GM12878 (cell line): ENCODE measurements at regions of chr6 and their contacts with region 1.

Region 1: GRCh38 chr6:42043787-42044475 is 6.4 kb upstream of the TAF8 start:
- DNase-seq: peak; percentile 68
- ATAC-seq: peak; percentile 79
- H3K4me3 ChIP-seq: peak overlapping the region; percentile 2; the same call in 1 of the 2 replicates
- H3K27ac ChIP-seq: peak overlapping the region; percentile 25; the same call in 1 of the 2 replicates
- H3K4me1 ChIP-seq: peaks cover 43% of the 10 kb centered on the region
- H3K27me3 ChIP-seq: no peaks in the 10 kb centered on the region
- CTCF ChIP-seq: peak; percentile 95 to 99 (median 98); a peak in 5 of 6 replicates
- EP300 ChIP-seq: no peak
- POLR2A ChIP-seq: no peak
- RAD21 ChIP-seq: peak; percentile 100

Region 2: DNA sequence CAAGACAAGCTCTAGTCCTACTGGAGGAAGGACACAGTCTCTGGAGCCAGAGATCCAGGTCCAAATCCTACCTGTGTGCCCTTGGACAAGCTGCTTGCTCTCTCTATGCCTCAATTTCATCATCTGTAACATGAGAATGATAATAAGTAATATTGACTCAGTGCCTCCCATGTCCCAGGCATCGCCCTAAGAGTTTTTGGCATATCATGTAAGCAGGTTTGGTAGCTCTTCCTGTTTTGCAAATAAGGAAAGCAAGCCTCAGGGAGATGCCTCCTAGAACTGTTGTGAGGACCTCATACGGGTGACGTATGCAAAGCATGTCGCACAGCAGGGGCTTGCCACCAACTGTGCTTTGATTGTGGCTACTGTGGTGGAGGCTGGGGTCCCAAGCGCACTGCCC is 1395.0 kb before region 1 on chr6:
- CTCF ChIA-PET with region 1: no interaction called
- POLR2A ChIA-PET with region 1: no interaction called
- RAD21 ChIA-PET with region 1: no interaction called
- SMC1A ChIA-PET with region 1: no interaction called
- in situ Hi-C with region 1: no loop called
- intact Hi-C with region 1: no loop called
- DNase-seq: no peak
- ATAC-seq: no peak
- H3K4me3 ChIP-seq: no peak overlapping the region
- H3K27ac ChIP-seq: no peak overlapping the region
- H3K4me1 ChIP-seq: no peaks in the 10 kb centered on the region
- H3K27me3 ChIP-seq: peaks cover 0 to 4% of the 10 kb centered on the region in 2 experiments
- CTCF ChIP-seq: no peak
- EP300 ChIP-seq: no peak
- POLR2A ChIP-seq: no peak
- RAD21 ChIP-seq: no peak

Region 3: DNA sequence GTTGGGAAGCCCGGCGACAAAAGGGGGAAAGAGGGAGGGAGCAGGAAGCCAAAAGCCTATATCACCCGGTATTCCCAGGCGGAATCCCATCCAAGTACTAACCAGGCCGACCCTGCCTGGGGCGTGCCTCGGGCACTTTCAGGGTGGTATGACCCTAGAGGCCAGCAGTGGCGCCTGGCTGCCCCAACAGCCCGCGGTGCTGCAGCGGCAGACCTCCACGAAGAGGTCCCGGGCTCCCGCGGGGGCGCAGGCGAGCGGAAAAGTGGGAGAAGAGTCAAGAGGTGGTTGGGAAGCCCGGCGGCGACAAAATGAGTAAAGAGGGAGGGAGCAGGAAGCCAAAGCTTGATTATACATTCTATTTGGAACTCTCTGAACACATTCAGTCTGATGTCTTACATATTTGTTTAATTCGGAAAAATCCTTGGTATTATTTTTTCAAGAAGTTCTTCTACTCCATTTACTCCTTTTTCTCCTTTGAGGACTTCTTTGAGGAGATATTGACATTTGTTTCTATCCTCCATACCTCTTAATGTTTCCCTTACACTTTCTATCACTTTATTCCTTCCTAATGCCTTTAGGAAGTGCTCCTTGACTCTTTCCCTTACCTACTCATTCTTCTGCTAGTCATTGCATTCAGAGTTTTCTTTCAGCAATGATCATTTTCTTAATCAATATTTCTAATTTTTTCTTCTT is 804.3 kb before region 1 on chr6:
- CTCF ChIA-PET with region 1: no interaction called
- POLR2A ChIA-PET with region 1: no interaction called
- RAD21 ChIA-PET with region 1: no interaction called
- SMC1A ChIA-PET with region 1: no interaction called
- in situ Hi-C with region 1: no loop called
- intact Hi-C with region 1: no loop called
- DNase-seq: no peak
- ATAC-seq: no peak
- H3K4me3 ChIP-seq: no peak overlapping the region
- H3K27ac ChIP-seq: no peak overlapping the region
- H3K4me1 ChIP-seq: no peaks in the 10 kb centered on the region
- H3K27me3 ChIP-seq: peaks cover 2 to 4% of the 10 kb centered on the region in 2 experiments; a peak in 3 of 4 replicates
- CTCF ChIP-seq: no peak
- EP300 ChIP-seq: no peak
- POLR2A ChIP-seq: no peak
- RAD21 ChIP-seq: no peak

Region 4: GRCh38 chr6:41705996-41706835 is 337.7 kb before region 1 on chr6:
- CTCF ChIA-PET with region 1: interaction called, 5 read pairs
- POLR2A ChIA-PET with region 1: no interaction called
- RAD21 ChIA-PET with region 1: no interaction called
- SMC1A ChIA-PET with region 1: interaction called, 3 read pairs
- in situ Hi-C with region 1: no loop called
- intact Hi-C with region 1: loop called (anchors 10 kb)
- DNase-seq: peak; percentile 87
- ATAC-seq: peak; percentile 90
- H3K4me3 ChIP-seq: peak overlapping the region; percentile 85
- H3K27ac ChIP-seq: peak overlapping the region; percentile 99
- H3K4me1 ChIP-seq: peaks cover 55% of the 10 kb centered on the region
- H3K27me3 ChIP-seq: no peaks in the 10 kb centered on the region
- CTCF ChIP-seq: peak; percentile 82 to 96 (median 91)
- EP300 ChIP-seq: peak; percentile 93 to 97
- POLR2A ChIP-seq: peak; percentile 51; the same call in 1 of the 2 replicates
- RAD21 ChIP-seq: peak; percentile 48

Region 5: GRCh38 chr6:41801380-41801779 is 242.6 kb before region 1 on chr6:
- CTCF ChIA-PET with region 1: interaction called, 38 read pairs
- POLR2A ChIA-PET with region 1: no interaction called
- RAD21 ChIA-PET with region 1: interaction called, 14 read pairs
- SMC1A ChIA-PET with region 1: interaction called, 14 read pairs
- in situ Hi-C with region 1: no loop called
- intact Hi-C with region 1: loop called (anchors 5 kb)
- DNase-seq: no peak
- ATAC-seq: no peak
- H3K4me3 ChIP-seq: no peak overlapping the region
- H3K27ac ChIP-seq: no peak overlapping the region
- H3K4me1 ChIP-seq: no peaks in the 10 kb centered on the region
- H3K27me3 ChIP-seq: no peaks in the 10 kb centered on the region
- CTCF ChIP-seq: peak; percentile 25 to 49 (median 26); a peak in 5 of 6 replicates
- EP300 ChIP-seq: no peak
- POLR2A ChIP-seq: no peak
- RAD21 ChIP-seq: peak; percentile 63

Region 6: DNA sequence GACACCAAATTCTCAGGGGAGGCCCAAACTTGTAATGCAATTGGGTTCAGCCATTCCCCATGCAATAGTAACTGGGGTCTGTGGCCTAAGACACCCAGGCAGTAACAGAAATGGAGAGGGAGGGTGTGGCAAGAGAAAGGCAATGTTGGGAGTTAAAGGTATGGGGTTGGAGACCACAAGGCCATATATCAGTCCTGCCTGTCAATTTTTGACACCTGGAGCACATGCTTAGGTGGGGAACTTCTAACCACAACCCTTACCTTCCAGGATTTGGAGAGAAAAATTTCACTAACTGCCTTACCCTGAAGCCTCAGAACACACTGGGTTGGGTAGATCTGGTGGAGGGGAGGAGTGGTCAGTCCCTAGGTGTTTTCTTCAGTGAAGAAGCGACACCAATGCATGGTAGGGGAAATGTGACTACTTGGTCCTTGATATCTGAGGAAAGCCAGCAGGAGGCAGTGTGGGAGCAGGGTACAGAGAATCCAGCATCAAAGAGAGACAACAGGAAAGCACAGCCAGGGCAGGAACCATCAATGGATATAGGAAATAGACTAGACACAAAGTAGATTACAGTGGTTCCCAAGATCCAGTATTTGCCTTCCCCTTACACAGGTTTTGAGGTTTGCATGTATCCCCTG is 141.9 kb before region 1 on chr6:
- CTCF ChIA-PET with region 1: interaction called, 51 read pairs
- POLR2A ChIA-PET with region 1: interaction called, 3 read pairs
- RAD21 ChIA-PET with region 1: interaction called, 29 read pairs
- SMC1A ChIA-PET with region 1: interaction called, 13 read pairs
- in situ Hi-C with region 1: no loop called
- intact Hi-C with region 1: loop called (anchors 1 kb)
- DNase-seq: no peak
- ATAC-seq: peak; percentile 69
- H3K4me3 ChIP-seq: no peak overlapping the region
- H3K27ac ChIP-seq: no peak overlapping the region
- H3K4me1 ChIP-seq: no peaks in the 10 kb centered on the region
- H3K27me3 ChIP-seq: no peaks in the 10 kb centered on the region
- CTCF ChIP-seq: peak; percentile 48 to 51 (median 48)
- EP300 ChIP-seq: no peak
- POLR2A ChIP-seq: no peak
- RAD21 ChIP-seq: peak; percentile 70

Region 7: DNA sequence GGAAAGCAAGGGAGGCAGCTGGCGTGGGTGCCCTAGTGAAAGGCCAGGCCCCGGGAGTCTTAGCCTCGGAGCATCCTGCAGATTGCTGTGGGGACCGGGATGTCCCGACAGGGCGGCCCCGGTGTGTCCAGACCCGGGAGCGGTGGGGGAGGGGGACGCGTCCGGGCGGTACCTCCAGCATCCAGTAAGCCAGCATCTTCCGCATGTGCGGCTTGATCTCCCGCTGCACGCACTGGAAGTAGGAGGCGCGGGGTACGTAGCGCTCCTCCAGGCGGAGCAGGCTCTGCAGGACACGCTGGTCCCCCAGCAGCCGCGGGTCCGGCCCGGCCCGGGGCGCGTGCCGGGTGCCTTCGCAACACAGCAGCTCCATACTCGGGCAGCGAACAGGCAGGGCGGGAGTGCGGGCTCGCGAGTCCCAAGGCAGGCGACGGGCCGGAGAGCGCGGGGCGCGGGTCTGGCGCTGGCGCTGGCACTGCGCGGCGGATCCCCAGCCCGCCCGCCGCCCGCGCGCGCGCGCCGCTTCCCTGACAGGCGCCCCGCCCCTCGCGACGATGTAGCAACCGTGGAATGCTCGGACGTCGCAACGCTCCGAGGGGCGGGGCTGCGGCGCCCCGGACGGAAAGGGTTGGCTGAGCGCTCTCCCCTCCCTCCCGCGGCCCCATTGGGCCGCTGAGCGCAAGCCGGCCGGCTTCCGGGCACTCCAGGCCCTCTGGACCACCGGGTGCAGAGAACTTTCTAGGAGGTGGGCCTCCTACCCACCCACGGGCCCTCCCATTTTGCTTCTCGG is 102.5 kb before region 1 on chr6 and contains the start of gene CCND3:
- CTCF ChIA-PET with region 1: interaction called, 193 read pairs
- POLR2A ChIA-PET with region 1: interaction called, 8 read pairs
- RAD21 ChIA-PET with region 1: interaction called, 69 read pairs
- SMC1A ChIA-PET with region 1: interaction called, 138 read pairs
- in situ Hi-C with region 1: loop called (anchors 10 kb)
- intact Hi-C with region 1: loop called (anchors 1 kb)
- DNase-seq: peak; percentile 44
- ATAC-seq: peak; percentile 94
- H3K4me3 ChIP-seq: peak within 1 kb of the TSS; percentile 98
- H3K27ac ChIP-seq: peak within 1 kb of the TSS; percentile 61
- H3K4me1 ChIP-seq: peaks cover 29% of the 10 kb centered on the region
- H3K27me3 ChIP-seq: no peaks in the 10 kb centered on the region
- CTCF ChIP-seq: no peak
- EP300 ChIP-seq: no peak
- POLR2A ChIP-seq: peak; percentile 27; the same call in 1 of the 2 replicates
- RAD21 ChIP-seq: no peak
- polyA plus RNA-seq, gene CCND3: 6.0 to 16.3 TPM

Region 8: DNA sequence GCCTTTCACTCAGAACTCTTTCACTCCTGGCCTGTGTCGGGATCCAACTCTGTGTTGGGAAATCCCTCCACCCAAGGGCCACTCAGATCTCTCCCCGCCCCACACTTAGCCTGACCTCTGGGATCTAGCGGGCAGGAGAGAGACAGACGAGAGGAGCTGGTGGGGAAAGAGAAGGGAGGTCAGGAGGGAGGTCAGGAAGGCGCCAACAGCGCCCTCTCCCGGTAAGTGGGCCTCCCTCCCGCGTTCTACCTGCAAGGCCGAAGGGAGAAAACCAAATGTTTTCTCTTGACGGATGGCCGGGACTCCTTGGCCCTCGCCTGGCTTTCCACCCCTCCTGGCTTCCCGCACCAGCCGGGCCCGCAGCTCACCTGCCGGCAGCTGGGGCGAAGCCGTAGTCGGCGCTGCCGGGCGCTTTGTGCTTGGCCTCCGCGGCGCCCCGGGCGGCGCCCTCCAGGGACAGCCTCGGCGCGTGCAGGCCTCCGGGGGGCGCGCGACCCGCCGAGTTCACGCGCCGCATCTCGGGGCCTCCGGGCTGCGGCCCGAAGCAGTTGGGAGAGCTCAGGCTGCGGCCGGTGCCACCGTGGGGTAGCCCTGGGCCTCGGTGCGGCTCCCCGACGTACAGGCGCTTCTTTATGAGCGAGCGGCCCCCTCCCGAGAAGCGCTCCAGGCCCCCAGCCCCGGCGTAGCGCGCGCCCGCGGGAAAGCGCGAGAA is 60.3 kb after region 1 on chr6:
- CTCF ChIA-PET with region 1: interaction called, 8 read pairs
- POLR2A ChIA-PET with region 1: interaction called, 3 read pairs
- RAD21 ChIA-PET with region 1: interaction called, 11 read pairs
- SMC1A ChIA-PET with region 1: no interaction called
- in situ Hi-C with region 1: no loop called
- intact Hi-C with region 1: no loop called
- DNase-seq: peak; percentile 15
- ATAC-seq: peak; percentile 90
- H3K4me3 ChIP-seq: peak overlapping the region; percentile 68; the same call in 1 of the 2 replicates
- H3K27ac ChIP-seq: no peak overlapping the region
- H3K4me1 ChIP-seq: no peaks in the 10 kb centered on the region
- H3K27me3 ChIP-seq: peaks cover 0 to 3% of the 10 kb centered on the region in 2 experiments; a peak in 1 of 4 replicates
- CTCF ChIP-seq: peak; percentile 64 to 86 (median 82)
- EP300 ChIP-seq: no peak
- POLR2A ChIP-seq: 0 out of 2 replicates have a peak, but pooled peaks have one; percentile 20
- RAD21 ChIP-seq: peak; percentile 38; the same call in 1 of the 2 replicates

Region 9: GRCh38 chr6:42142118-42142931 is 98.4 kb after region 1 on chr6 and contains the start of gene C6orf132:
- CTCF ChIA-PET with region 1: no interaction called
- POLR2A ChIA-PET with region 1: no interaction called
- RAD21 ChIA-PET with region 1: no interaction called
- SMC1A ChIA-PET with region 1: no interaction called
- in situ Hi-C with region 1: no loop called
- intact Hi-C with region 1: no loop called
- DNase-seq: no peak
- ATAC-seq: no peak
- H3K4me3 ChIP-seq: no peak within 1 kb of the TSS
- H3K27ac ChIP-seq: no peak within 1 kb of the TSS
- H3K4me1 ChIP-seq: no peaks in the 10 kb centered on the region
- H3K27me3 ChIP-seq: peaks cover 3 to 5% of the 10 kb centered on the region in 2 experiments
- CTCF ChIP-seq: no peak
- EP300 ChIP-seq: no peak
- POLR2A ChIP-seq: no peak
- RAD21 ChIP-seq: no peak
- polyA plus RNA-seq, gene C6orf132: not detected

Region 10: GRCh38 chr6:42338663-42339218 is 294.8 kb after region 1 on chr6:
- CTCF ChIA-PET with region 1: no interaction called
- POLR2A ChIA-PET with region 1: no interaction called
- RAD21 ChIA-PET with region 1: no interaction called
- SMC1A ChIA-PET with region 1: no interaction called
- in situ Hi-C with region 1: no loop called
- intact Hi-C with region 1: no loop called
- DNase-seq: no peak
- ATAC-seq: no peak
- H3K4me3 ChIP-seq: no peak overlapping the region
- H3K27ac ChIP-seq: no peak overlapping the region
- H3K4me1 ChIP-seq: peaks cover 10% of the 10 kb centered on the region
- H3K27me3 ChIP-seq: no peaks in the 10 kb centered on the region; a peak in 1 of 4 replicates
- CTCF ChIP-seq: no peak
- EP300 ChIP-seq: no peak
- POLR2A ChIP-seq: no peak
- RAD21 ChIP-seq: no peak